CD4-positive, alpha-beta T cell (primary cell): ENCODE measurements at regions of chr2 and their contacts with region 1.

Region 1: GRCh38 chr2:158464426-158465281 is 7.9 kb downstream of the PKP4 start:
- DNase-seq: peak in 3 of 14 experiments; percentile 30 to 53 (median 47)
- ATAC-seq: peak; percentile 77
- H3K4me3 ChIP-seq: no peak overlapping the region
- H3K4me3 Mint-ChIP-seq: no peak overlapping the region
- H3K27ac ChIP-seq: no peak overlapping the region
- H3K27ac Mint-ChIP-seq: no peak overlapping the region
- H3K4me1 ChIP-seq: no peaks in the 10 kb centered on the region
- H3K4me1 Mint-ChIP-seq: peaks cover 15% of the 10 kb centered on the region
- H3K27me3 ChIP-seq: no peaks in the 10 kb centered on the region
- H3K27me3 Mint-ChIP-seq: no peaks in the 10 kb centered on the region
- CTCF ChIP-seq: peak; percentile 72

Region 2: GRCh38 chr2:157628477-157629415 is 835.9 kb before region 1 on chr2 and contains the start of gene ACVR1C:
- CTCF ChIA-PET with region 1: no interaction called
- POLR2A ChIA-PET with region 1: no interaction called
- intact Hi-C with region 1: loop called in 1 of 2 experiments (anchors 10 kb)
- DNase-seq: peak; percentile 42 to 92 (median 61)
- ATAC-seq: peak; percentile 77
- H3K4me3 ChIP-seq: peak within 1 kb of the TSS; percentile 81
- H3K4me3 Mint-ChIP-seq: peak within 1 kb of the TSS; percentile 97
- H3K27ac ChIP-seq: peak within 1 kb of the TSS in 1 of 2 donors; percentile 74
- H3K27ac Mint-ChIP-seq: peak within 1 kb of the TSS; percentile 86
- H3K4me1 ChIP-seq: peaks cover 22% of the 10 kb centered on the region
- H3K4me1 Mint-ChIP-seq: peaks cover 40% of the 10 kb centered on the region
- H3K27me3 ChIP-seq: no peaks in the 10 kb centered on the region
- H3K27me3 Mint-ChIP-seq: no peaks in the 10 kb centered on the region
- CTCF ChIP-seq: peak; percentile 43
- total RNA-seq, gene ACVR1C: 5.2 to 6.2 TPM

Region 3: DNA sequence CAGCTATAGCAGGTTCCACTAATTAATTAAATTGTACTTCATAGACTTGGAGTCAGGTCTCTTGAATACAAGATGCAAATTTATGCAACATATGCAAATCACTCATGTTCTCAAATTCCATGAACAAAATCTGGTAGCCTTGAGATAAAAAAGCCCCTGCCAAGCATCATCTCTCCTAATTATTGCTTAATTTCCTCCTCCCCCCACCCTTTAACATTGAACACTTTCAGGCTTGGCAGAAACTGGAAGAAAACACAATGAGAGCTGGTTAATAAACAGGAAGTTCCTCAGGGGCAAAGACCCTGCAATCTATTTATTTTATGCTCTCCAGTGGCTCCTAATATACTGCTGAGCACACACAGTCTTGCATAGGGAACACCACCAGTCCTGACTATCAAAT is 552.9 kb before region 1 on chr2:
- CTCF ChIA-PET with region 1: no interaction called
- POLR2A ChIA-PET with region 1: no interaction called
- intact Hi-C with region 1: no loop called
- DNase-seq: no peak
- ATAC-seq: no peak
- H3K4me3 ChIP-seq: no peak overlapping the region
- H3K4me3 Mint-ChIP-seq: no peak overlapping the region
- H3K27ac ChIP-seq: no peak overlapping the region
- H3K27ac Mint-ChIP-seq: no peak overlapping the region
- H3K4me1 ChIP-seq: no peaks in the 10 kb centered on the region
- H3K4me1 Mint-ChIP-seq: no peaks in the 10 kb centered on the region
- H3K27me3 ChIP-seq: no peaks in the 10 kb centered on the region
- H3K27me3 Mint-ChIP-seq: no peaks in the 10 kb centered on the region
- CTCF ChIP-seq: no peak